CD8-positive, alpha-beta T cell (primary cell): ENCODE measurements at regions of chr1 and their contacts with region 1.

Region 1: GRCh38 chr1:174963529-174964125 is 36.1 kb upstream of the CACYBP start:
- DNase-seq: peak in 2 of 9 experiments; percentile 28 to 45
- ATAC-seq: no peak
- H3K4me3 ChIP-seq: no peak overlapping the region
- H3K4me3 Mint-ChIP-seq: no peak overlapping the region
- H3K27ac ChIP-seq: peak overlapping the region; percentile 62 to 89
- H3K27ac Mint-ChIP-seq: peak overlapping the region; percentile 98
- H3K4me1 ChIP-seq: peaks cover 53% of the 10 kb centered on the region
- H3K4me1 Mint-ChIP-seq: peaks cover 49% of the 10 kb centered on the region
- H3K27me3 ChIP-seq: no peaks in the 10 kb centered on the region
- H3K27me3 Mint-ChIP-seq: no peaks in the 10 kb centered on the region
- CTCF ChIP-seq: no peak

Region 2: GRCh38 chr1:174902531-174903099 is 61.0 kb before region 1 on chr1:
- CTCF ChIA-PET with region 1: no interaction called
- POLR2A ChIA-PET with region 1: no interaction called
- intact Hi-C with region 1: loop called in 1 of 2 experiments (anchors 2 kb)
- DNase-seq: no peak
- ATAC-seq: no peak
- H3K4me3 ChIP-seq: no peak overlapping the region
- H3K4me3 Mint-ChIP-seq: no peak overlapping the region
- H3K27ac ChIP-seq: no peak overlapping the region
- H3K27ac Mint-ChIP-seq: no peak overlapping the region
- H3K4me1 ChIP-seq: no peaks in the 10 kb centered on the region
- H3K4me1 Mint-ChIP-seq: no peaks in the 10 kb centered on the region
- H3K27me3 ChIP-seq: no peaks in the 10 kb centered on the region
- H3K27me3 Mint-ChIP-seq: no peaks in the 10 kb centered on the region
- CTCF ChIP-seq: no peak

Region 3: GRCh38 chr1:175009532-175009931 is 45.9 kb after region 1 on chr1:
- CTCF ChIA-PET with region 1: no interaction called
- POLR2A ChIA-PET with region 1: no interaction called
- intact Hi-C with region 1: no loop called
- DNase-seq: no peak
- ATAC-seq: no peak
- H3K4me3 ChIP-seq: no peak overlapping the region
- H3K4me3 Mint-ChIP-seq: no peak overlapping the region
- H3K27ac ChIP-seq: no peak overlapping the region
- H3K27ac Mint-ChIP-seq: no peak overlapping the region
- H3K4me1 ChIP-seq: no peaks in the 10 kb centered on the region
- H3K4me1 Mint-ChIP-seq: peaks cover 17% of the 10 kb centered on the region
- H3K27me3 ChIP-seq: no peaks in the 10 kb centered on the region
- H3K27me3 Mint-ChIP-seq: no peaks in the 10 kb centered on the region
- CTCF ChIP-seq: no peak